A673 (cell line): ENCODE measurements at regions of chrX and their contacts with region 1.

Region 1: DNA sequence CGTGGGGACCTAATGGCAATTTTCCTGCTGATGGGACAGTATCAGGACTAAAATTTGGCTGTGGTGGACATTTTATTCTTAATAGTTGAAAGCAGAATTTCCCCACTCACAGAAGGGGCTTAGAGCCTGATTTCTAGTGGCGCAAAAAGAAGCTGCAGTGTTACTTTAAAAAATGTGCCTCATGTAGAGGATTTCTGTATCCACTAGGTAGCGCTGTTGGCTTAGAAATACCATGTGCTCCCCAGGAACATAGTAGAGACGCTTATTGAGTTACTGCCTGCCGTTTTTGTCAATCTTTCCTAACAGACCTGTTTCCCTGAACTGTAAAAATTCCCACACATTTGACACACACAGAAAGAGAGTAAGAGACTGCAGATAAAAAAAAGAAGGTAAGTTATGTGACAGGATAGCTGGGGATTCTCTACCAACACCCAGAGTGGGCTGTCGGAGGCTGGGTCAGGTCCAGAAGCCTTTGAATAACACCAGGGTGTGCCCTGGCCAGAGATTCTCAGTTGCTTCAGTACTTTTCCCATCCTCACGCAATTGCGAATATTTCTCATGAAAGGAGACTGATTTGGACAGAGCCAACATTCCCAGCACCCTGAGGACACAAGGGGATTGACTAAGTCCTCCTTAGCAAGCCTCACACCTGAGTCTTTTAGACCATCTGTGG is 88.4 kb downstream of the ZXDA start:
- DNase-seq: peak; percentile 81
- H3K4me3 ChIP-seq: peak overlapping the region; percentile 36
- H3K27ac ChIP-seq: no peak overlapping the region
- H3K4me1 ChIP-seq: no peaks in the 10 kb centered on the region
- H3K27me3 ChIP-seq: no peaks in the 10 kb centered on the region
- CTCF ChIP-seq: peak; percentile 70

Region 2: GRCh38 chrX:57595381-57595811 is 226.4 kb before region 1 on chrX:
- CTCF ChIA-PET with region 1: no interaction called
- POLR2A ChIA-PET with region 1: no interaction called
- intact Hi-C with region 1: loop called (anchors 10 kb)
- DNase-seq: peak; percentile 24
- H3K4me3 ChIP-seq: peak overlapping the region; percentile 25
- H3K27ac ChIP-seq: no peak overlapping the region
- H3K4me1 ChIP-seq: peaks cover 9% of the 10 kb centered on the region
- H3K27me3 ChIP-seq: no peaks in the 10 kb centered on the region
- CTCF ChIP-seq: no peak

Region 3: GRCh38 chrX:57918750-57919436 is 97.1 kb after region 1 on chrX:
- CTCF ChIA-PET with region 1: interaction called, 3 read pairs
- POLR2A ChIA-PET with region 1: no interaction called
- intact Hi-C with region 1: loop called (anchors 1 kb)
- DNase-seq: peak; percentile 70
- H3K4me3 ChIP-seq: no peak overlapping the region
- H3K27ac ChIP-seq: no peak overlapping the region
- H3K4me1 ChIP-seq: no peaks in the 10 kb centered on the region
- H3K27me3 ChIP-seq: no peaks in the 10 kb centered on the region
- CTCF ChIP-seq: peak; percentile 61

Region 4: DNA sequence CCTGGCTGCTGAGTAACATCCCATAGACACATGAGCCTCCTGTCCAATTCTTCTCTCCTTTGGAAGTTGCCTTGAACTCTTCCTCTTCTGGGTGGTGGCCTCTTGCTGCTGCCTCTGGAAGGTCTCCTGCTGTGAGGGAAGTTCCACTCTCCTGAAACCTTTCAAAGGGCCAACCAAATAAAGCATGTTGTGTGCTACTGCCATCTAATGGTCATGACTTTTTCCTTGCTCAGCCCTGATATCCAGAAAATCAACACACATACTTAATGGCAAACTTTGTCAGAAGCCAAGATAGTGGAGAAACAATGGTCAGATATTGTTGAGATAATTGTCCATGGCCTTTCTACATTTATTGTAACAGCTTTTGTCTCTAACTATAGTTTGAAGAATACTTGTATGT is 107.5 kb after region 1 on chrX:
- CTCF ChIA-PET with region 1: no interaction called
- POLR2A ChIA-PET with region 1: no interaction called
- intact Hi-C with region 1: loop called (anchors 1 kb)
- DNase-seq: peak; percentile 67
- H3K4me3 ChIP-seq: no peak overlapping the region
- H3K27ac ChIP-seq: no peak overlapping the region
- H3K4me1 ChIP-seq: no peaks in the 10 kb centered on the region
- H3K27me3 ChIP-seq: no peaks in the 10 kb centered on the region
- CTCF ChIP-seq: peak; percentile 66

Region 5: DNA sequence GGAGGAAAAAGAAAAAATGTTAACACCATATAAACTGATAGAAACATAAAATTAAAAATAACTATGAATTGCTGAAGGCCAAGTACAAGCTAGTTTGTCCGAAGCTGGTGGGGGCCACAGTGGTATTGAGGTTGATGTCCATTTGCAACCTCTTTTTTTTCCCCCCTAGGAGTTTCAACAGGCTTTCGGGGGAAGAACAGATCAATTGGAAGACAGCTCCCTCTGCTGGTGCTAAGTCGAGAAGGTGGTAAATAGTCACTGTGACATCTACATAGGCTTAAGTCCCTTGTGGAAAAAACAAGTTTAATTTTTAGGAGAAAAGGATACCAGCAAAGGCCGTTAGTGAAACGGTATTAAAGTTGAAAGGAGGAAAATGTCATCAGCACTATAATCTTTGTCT is 204.1 kb after region 1 on chrX:
- CTCF ChIA-PET with region 1: interaction called, 3 read pairs
- POLR2A ChIA-PET with region 1: no interaction called
- intact Hi-C with region 1: loop called (anchors 2 kb)
- DNase-seq: peak; percentile 52
- H3K4me3 ChIP-seq: no peak overlapping the region
- H3K27ac ChIP-seq: no peak overlapping the region
- H3K4me1 ChIP-seq: no peaks in the 10 kb centered on the region
- H3K27me3 ChIP-seq: no peaks in the 10 kb centered on the region
- CTCF ChIP-seq: peak; percentile 73